ENCODE measurements at regions of chr10 and their contacts with region 1.

Region 1: GRCh38 chr10:96339957-96340904 is 18.6 kb downstream of the OPALIN start:
- DNase-seq: peak in 1 of 2 experiments; percentile 74
- H3K4me3 ChIP-seq: no peak overlapping the region
- H3K27ac ChIP-seq: no peak overlapping the region
- H3K4me1 ChIP-seq: peaks cover 0 to 14% (median 10%) of the 10 kb centered on the region in 4 experiments; a peak in 6 of 7 replicates
- H3K27me3 ChIP-seq: peaks cover 0 to 1% (median 0%) of the 10 kb centered on the region in 4 experiments; a peak in 1 of 7 replicates
- CTCF ChIP-seq: peak; percentile 71 to 80 (median 80)
- EP300 ChIP-seq: no peak
- POLR2A ChIP-seq: no peak
- RAD21 ChIP-seq: peak; percentile 70 to 75

Region 2: GRCh38 chr10:96017191-96017687 is 323.0 kb before region 1 on chr10:
- CTCF ChIA-PET with region 1: interaction called, 10 read pairs
- POLR2A ChIA-PET with region 1: no interaction called
- DNase-seq: peak in 1 of 2 experiments; percentile 54
- H3K4me3 ChIP-seq: no peak overlapping the region
- H3K27ac ChIP-seq: no peak overlapping the region
- H3K4me1 ChIP-seq: no peaks in the 10 kb centered on the region
- H3K27me3 ChIP-seq: no peaks in the 10 kb centered on the region
- CTCF ChIP-seq: peak in 2 of 3 experiments; percentile 62 to 70; a peak in 3 of 4 replicates
- EP300 ChIP-seq: no peak
- POLR2A ChIP-seq: no peak
- RAD21 ChIP-seq: peak; percentile 83 to 86

Region 3: DNA sequence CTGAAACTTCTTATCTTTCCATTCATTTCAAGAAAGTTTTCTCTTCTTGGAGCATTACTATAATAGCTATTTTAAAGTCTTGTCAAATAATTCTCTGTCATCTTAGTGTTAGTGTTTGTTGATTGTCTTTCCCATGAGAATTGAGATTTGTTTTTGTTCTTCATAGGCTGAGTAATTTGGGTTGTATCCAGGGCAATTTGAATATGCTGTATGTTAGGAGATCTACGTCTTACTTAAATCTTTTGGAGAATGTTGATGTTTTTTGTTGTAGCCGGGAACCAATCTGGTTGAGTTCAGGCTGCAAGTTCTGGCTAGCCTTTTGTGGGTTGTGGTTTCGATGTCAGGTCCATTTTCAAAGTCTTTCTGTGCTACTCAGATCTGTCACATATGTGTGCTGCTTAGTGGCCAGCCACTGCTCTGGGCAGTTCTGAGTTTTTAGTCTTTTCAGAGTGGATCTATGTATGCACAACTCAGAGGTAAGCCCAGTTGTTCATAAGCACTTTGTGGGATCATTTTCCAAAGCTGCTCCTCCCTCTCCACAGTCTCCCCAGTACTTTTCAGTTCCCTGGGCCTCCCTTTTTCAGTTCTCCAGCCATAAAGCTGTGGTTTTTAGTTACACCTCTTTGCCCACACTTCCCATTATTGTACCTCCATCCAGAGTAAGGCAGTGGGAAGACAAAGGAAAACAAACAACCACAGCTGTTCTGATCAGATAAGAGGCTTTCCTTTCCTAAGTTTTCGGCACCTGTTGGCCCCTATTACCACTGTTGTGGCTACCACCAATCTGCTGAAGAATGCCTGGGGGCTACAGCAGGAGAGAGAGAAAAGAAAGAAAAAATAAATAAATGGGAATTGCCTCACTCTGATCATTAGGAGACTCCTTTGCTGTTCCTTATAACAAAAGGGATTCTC is 301.5 kb before region 1 on chr10:
- CTCF ChIA-PET with region 1: no interaction called
- POLR2A ChIA-PET with region 1: no interaction called
- DNase-seq: no peak
- H3K4me3 ChIP-seq: no peak overlapping the region
- H3K27ac ChIP-seq: no peak overlapping the region
- H3K4me1 ChIP-seq: no peaks in the 10 kb centered on the region
- H3K27me3 ChIP-seq: peaks cover 0 to 9% (median 4%) of the 10 kb centered on the region in 4 experiments; a peak in 5 of 7 replicates
- CTCF ChIP-seq: no peak
- EP300 ChIP-seq: no peak
- POLR2A ChIP-seq: no peak
- RAD21 ChIP-seq: no peak

Region 4: DNA sequence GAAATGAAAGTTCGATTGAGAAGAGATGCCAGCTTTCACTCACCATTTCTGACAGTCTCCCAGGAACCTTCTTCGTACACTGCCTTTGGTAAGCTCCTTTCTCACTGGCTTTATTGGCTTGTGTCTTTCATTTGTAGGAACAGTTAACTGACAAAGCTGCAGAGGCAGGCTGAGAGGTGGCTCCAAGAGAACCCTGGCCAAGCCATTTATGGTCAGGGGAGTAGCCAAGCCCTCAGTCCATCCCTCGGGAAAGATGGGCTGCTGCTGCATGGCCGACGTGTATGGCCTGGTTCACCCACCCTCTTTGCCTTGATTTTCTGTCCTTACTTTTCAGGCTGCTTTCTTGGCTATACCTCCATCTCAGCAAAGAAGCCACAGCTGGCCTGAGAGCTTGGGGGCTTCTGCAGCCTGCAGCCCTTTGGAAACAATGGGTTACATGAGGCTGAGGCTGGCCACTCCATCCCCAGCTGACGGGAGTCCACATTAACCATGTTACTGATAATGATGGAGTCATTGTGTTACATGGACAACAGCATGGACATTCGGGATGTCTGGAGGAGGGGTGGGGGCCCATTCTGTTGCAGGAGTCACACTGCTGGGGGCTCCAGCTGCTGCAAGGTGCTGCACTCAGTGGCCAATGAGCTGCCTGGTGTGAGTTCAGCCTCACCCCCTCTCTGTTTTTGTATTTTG is 18.8 kb after region 1 on chr10 and contains the start of gene OPALIN:
- CTCF ChIA-PET with region 1: interaction called, 10 read pairs
- POLR2A ChIA-PET with region 1: interaction called, 3 read pairs
- DNase-seq: no peak
- H3K4me3 ChIP-seq: no peak within 1 kb of the TSS
- H3K27ac ChIP-seq: no peak within 1 kb of the TSS
- H3K4me1 ChIP-seq: no peaks in the 10 kb centered on the region
- H3K27me3 ChIP-seq: no peaks in the 10 kb centered on the region; a peak in 1 of 7 replicates
- CTCF ChIP-seq: no peak
- EP300 ChIP-seq: no peak
- POLR2A ChIP-seq: no peak
- RAD21 ChIP-seq: no peak
- total RNA-seq, gene OPALIN: not detected in 2 replicates

Region 5: GRCh38 chr10:96401036-96401435 is 60.8 kb after region 1 on chr10:
- CTCF ChIA-PET with region 1: no interaction called
- POLR2A ChIA-PET with region 1: no interaction called
- DNase-seq: no peak
- H3K4me3 ChIP-seq: no peak overlapping the region
- H3K27ac ChIP-seq: no peak overlapping the region
- H3K4me1 ChIP-seq: peaks cover 0 to 7% (median 2%) of the 10 kb centered on the region in 4 experiments; a peak in 6 of 7 replicates
- H3K27me3 ChIP-seq: no peaks in the 10 kb centered on the region; a peak in 1 of 7 replicates
- CTCF ChIP-seq: no peak
- EP300 ChIP-seq: no peak
- POLR2A ChIP-seq: no peak
- RAD21 ChIP-seq: no peak

Measured in H1 (cell line).